ENCODE measurements at regions of chr3 and their contacts with region 1.

Region 1: GRCh38 chr3:180320631-180321030 is 281.3 kb upstream of the TTC14 start:
- DNase-seq: no peak
- ATAC-seq: no peak
- H3K4me3 ChIP-seq: no peak overlapping the region
- H3K27ac ChIP-seq: no peak overlapping the region
- H3K4me1 ChIP-seq: no peaks in the 10 kb centered on the region
- H3K27me3 ChIP-seq: no peaks in the 10 kb centered on the region
- CTCF ChIP-seq: no peak
- EP300 ChIP-seq: no peak
- POLR2A ChIP-seq: no peak
- RAD21 ChIP-seq: no peak

Region 2: DNA sequence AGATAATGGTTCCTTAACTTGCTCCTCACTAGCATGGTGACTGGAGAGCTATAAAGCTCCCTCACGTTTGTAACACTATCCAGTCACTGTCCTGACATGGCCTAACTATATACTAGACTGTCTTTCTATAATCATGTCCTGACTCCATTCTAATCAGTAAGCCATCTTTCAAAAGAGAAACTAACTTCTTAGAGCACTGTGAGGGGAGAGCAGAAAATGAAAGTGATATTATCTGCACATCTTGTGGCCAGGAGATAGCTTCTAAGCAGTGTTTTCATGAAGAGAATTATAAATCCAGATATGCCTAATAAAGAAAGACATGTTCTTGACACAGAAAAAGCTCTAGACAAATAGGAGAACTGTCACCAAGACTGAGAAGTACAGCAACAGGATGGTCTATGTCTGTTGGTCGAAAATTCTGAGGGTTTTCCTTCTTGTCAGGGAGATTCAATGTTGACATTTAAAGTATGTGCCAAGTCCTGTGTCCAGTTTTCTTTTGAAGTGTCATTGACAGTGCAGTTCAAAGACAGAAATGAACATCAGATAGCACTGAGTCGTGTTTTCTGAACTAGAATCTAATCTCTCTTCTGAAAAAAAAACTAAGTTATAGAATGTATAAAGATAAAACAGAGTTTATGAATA is 53.3 kb before region 1 on chr3:
- CTCF ChIA-PET with region 1: no interaction called
- POLR2A ChIA-PET with region 1: interaction called, 3 read pairs
- RAD21 ChIA-PET with region 1: no interaction called
- SMC1A ChIA-PET with region 1: interaction called, 10 read pairs
- in situ Hi-C with region 1: no loop called
- intact Hi-C with region 1: no loop called
- DNase-seq: peak; percentile 69
- ATAC-seq: peak; percentile 99
- H3K4me3 ChIP-seq: peak overlapping the region; percentile 20; the same call in 1 of the 2 replicates
- H3K27ac ChIP-seq: peak overlapping the region; percentile 54
- H3K4me1 ChIP-seq: peaks cover 10% of the 10 kb centered on the region; the same call in 1 of the 2 replicates
- H3K27me3 ChIP-seq: no peaks in the 10 kb centered on the region
- CTCF ChIP-seq: no peak
- EP300 ChIP-seq: no peak
- POLR2A ChIP-seq: no peak
- RAD21 ChIP-seq: no peak